Sigmoid colon (tissue), 7 donors: ENCODE measurements at regions of chr21 and their contacts with region 1.

Region 1: DNA sequence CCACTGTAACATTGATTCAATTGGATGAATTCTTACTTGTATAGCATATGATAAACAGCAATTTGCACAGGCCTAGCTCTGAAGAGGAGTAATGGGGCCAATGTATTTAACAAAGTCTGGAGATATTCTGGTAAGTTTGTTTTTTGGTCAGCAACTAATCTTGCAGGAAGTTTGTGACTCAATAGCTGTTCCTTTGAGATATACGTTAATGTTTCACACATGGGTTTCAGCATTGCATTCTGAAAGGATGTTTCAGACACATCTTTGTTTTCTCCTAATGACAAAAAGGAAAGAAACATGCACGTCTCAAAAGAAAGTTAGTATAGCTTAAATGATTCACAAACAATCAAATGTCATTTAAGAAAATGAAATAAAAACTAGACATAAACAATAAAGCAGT is 49.0 kb downstream of the LTN1 start:
- DNase-seq: no peak
- H3K4me3 ChIP-seq: no peak overlapping the region
- H3K27ac ChIP-seq: no peak overlapping the region
- H3K4me1 ChIP-seq: peaks cover 0 to 5% (median 0%) of the 10 kb centered on the region in 4 donors
- H3K27me3 ChIP-seq: no peaks in the 10 kb centered on the region
- CTCF ChIP-seq: no peak
- EP300 ChIP-seq: no peak
- POLR2A ChIP-seq: no peak

Region 2: DNA sequence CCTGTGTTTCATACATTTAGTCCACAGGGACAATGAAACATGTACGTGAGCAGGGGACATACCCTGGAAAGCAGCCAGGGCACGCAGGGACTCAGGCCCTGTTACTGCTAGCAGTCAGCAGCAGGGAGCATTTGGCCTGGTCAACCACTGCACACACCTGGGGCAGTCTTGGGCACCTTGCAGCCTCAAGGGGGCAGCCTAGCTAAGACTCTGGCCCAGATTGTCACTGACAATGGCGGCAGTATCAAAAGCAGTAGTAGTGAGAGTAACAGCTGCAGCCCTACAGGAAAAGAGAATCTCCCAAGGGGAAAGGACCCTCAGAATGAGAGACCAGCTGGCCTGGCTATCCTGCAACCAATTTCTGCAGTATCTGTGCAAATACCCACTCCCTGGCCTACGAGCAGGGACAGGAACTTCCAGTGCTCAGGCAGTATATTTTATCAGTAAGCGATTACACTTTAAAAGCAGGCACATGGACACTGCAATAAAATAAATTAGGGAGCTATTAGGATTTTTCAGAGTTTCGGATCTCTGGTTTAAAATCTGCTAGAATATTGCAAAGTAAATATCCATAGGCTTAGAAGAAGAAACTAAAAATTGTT is 426.5 kb before region 1 on chr21:
- intact Hi-C with region 1: loop called (anchors 5 kb)
- DNase-seq: peak; percentile 71
- H3K4me3 ChIP-seq: no peak overlapping the region
- H3K27ac ChIP-seq: no peak overlapping the region
- H3K4me1 ChIP-seq: no peaks in the 10 kb centered on the region
- H3K27me3 ChIP-seq: no peaks in the 10 kb centered on the region
- CTCF ChIP-seq: peak in 3 of 4 experiments; percentile 30 to 56 (median 54)
- EP300 ChIP-seq: no peak
- POLR2A ChIP-seq: no peak

Region 3: GRCh38 chr21:29449306-29449950 is 505.8 kb after region 1 on chr21:
- intact Hi-C with region 1: no loop called
- DNase-seq: no peak
- H3K4me3 ChIP-seq: no peak overlapping the region
- H3K27ac ChIP-seq: no peak overlapping the region
- H3K4me1 ChIP-seq: no peaks in the 10 kb centered on the region
- H3K27me3 ChIP-seq: no peaks in the 10 kb centered on the region
- CTCF ChIP-seq: no peak
- EP300 ChIP-seq: no peak
- POLR2A ChIP-seq: no peak